ENCODE measurements at regions of chr18 and their contacts with region 1.

Region 1: GRCh38 chr18:32919799-32920198 is 147.0 kb upstream of the KLHL14 start:
- DNase-seq: no peak
- ATAC-seq: peak; percentile 96
- H3K4me3 Mint-ChIP-seq: peak overlapping the region; percentile 42
- H3K27ac Mint-ChIP-seq: peak overlapping the region; percentile 72
- H3K4me1 Mint-ChIP-seq: peaks cover 47% of the 10 kb centered on the region
- H3K27me3 Mint-ChIP-seq: no peaks in the 10 kb centered on the region
- CTCF ChIP-seq: peak; percentile 72

Region 2: GRCh38 chr18:32092422-32093101 is 827.2 kb before region 1 on chr18:
- CTCF ChIA-PET with region 1: no interaction called
- POLR2A ChIA-PET with region 1: no interaction called
- intact Hi-C with region 1: loop called (anchors 10 kb)
- DNase-seq: peak; percentile 100
- ATAC-seq: peak; percentile 90
- H3K4me3 Mint-ChIP-seq: peak overlapping the region; percentile 98
- H3K27ac Mint-ChIP-seq: peak overlapping the region; percentile 96
- H3K4me1 Mint-ChIP-seq: peaks cover 44% of the 10 kb centered on the region
- H3K27me3 Mint-ChIP-seq: no peaks in the 10 kb centered on the region
- CTCF ChIP-seq: no peak

Region 3: DNA sequence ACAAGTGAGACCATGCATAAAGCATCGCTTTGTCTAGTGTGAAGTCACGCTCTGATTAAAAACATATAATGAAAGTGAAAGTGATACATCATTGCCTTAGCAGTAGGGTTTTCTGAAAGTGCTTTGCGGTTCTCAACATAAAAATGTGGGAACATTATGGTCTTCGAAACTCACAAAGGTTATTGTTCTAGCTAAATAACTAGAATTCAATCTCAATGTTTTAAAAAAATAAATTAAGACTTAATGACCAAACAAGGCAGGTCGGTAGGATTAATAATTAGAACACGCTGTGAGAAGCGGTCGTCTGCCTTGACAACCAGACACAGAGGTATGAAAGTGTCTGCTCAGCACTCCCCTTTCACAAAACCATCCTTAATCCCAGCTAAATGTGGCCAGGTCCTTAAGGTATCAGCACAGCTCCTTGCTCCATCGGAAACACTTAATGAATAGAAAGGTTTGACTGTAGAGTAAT is 189.1 kb before region 1 on chr18:
- CTCF ChIA-PET with region 1: no interaction called
- POLR2A ChIA-PET with region 1: no interaction called
- intact Hi-C with region 1: loop called (anchors 1 kb)
- DNase-seq: no peak
- ATAC-seq: peak; percentile 88
- H3K4me3 Mint-ChIP-seq: peak overlapping the region; percentile 72
- H3K27ac Mint-ChIP-seq: peak overlapping the region; percentile 86
- H3K4me1 Mint-ChIP-seq: peaks cover 50% of the 10 kb centered on the region
- H3K27me3 Mint-ChIP-seq: no peaks in the 10 kb centered on the region
- CTCF ChIP-seq: no peak

Region 4: DNA sequence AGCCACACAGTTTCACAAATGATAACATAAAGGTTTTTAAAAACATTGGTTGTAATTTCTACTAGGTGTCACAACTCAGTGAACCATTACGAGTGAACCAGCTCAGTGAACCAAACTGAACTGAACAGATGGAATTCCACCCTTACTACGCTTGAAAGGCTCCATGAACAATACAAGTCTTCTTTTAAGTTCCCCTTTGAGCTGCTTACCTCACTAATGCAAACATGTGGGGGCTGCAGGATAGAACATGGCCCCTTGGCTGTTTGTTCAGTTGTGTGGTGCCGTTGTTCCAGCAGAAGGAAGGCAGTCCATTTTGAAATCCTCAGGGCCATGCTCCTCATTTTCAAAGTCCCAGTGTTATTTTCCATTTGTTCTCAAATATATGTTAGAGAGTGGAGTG is 116.2 kb before region 1 on chr18:
- CTCF ChIA-PET with region 1: no interaction called
- POLR2A ChIA-PET with region 1: no interaction called
- intact Hi-C with region 1: loop called (anchors 1 kb)
- DNase-seq: no peak
- ATAC-seq: peak; percentile 88
- H3K4me3 Mint-ChIP-seq: peak overlapping the region; percentile 75
- H3K27ac Mint-ChIP-seq: peak overlapping the region; percentile 98
- H3K4me1 Mint-ChIP-seq: peaks cover 53% of the 10 kb centered on the region
- H3K27me3 Mint-ChIP-seq: no peaks in the 10 kb centered on the region
- CTCF ChIP-seq: no peak

Region 5: GRCh38 chr18:32868406-32868805 is 51.4 kb before region 1 on chr18:
- CTCF ChIA-PET with region 1: interaction called, 5 read pairs
- POLR2A ChIA-PET with region 1: interaction called, 6 read pairs
- intact Hi-C with region 1: loop called (anchors 1 kb)
- DNase-seq: no peak
- ATAC-seq: peak; percentile 62
- H3K4me3 Mint-ChIP-seq: peak overlapping the region; percentile 72
- H3K27ac Mint-ChIP-seq: peak overlapping the region; percentile 95
- H3K4me1 Mint-ChIP-seq: peaks cover 90% of the 10 kb centered on the region
- H3K27me3 Mint-ChIP-seq: no peaks in the 10 kb centered on the region
- CTCF ChIP-seq: no peak

Region 6: GRCh38 chr18:32899819-32900218 is 20.0 kb before region 1 on chr18:
- CTCF ChIA-PET with region 1: interaction called, 3 read pairs
- POLR2A ChIA-PET with region 1: no interaction called
- intact Hi-C with region 1: loop called (anchors 2 kb)
- DNase-seq: no peak
- ATAC-seq: no peak
- H3K4me3 Mint-ChIP-seq: no peak overlapping the region
- H3K27ac Mint-ChIP-seq: no peak overlapping the region
- H3K4me1 Mint-ChIP-seq: peaks cover 25% of the 10 kb centered on the region
- H3K27me3 Mint-ChIP-seq: no peaks in the 10 kb centered on the region
- CTCF ChIP-seq: no peak